Calu3 (cell line): ENCODE measurements at regions of chr1 and their contacts with region 1.

Region 1: GRCh38 chr1:171152549-171152948 is 32.6 kb upstream of the FMO2 start:
- DNase-seq: no peak
- H3K4me3 Mint-ChIP-seq: no peak overlapping the region
- H3K27ac Mint-ChIP-seq: no peak overlapping the region
- H3K4me1 Mint-ChIP-seq: no peaks in the 10 kb centered on the region
- H3K27me3 Mint-ChIP-seq: no peaks in the 10 kb centered on the region
- CTCF ChIP-seq: no peak

Region 2: GRCh38 chr1:170863621-170864020 is 288.9 kb before region 1 on chr1:
- CTCF ChIA-PET with region 1: interaction called, 10 read pairs
- intact Hi-C with region 1: no loop called
- DNase-seq: no peak
- H3K4me3 Mint-ChIP-seq: no peak overlapping the region
- H3K27ac Mint-ChIP-seq: no peak overlapping the region
- H3K4me1 Mint-ChIP-seq: no peaks in the 10 kb centered on the region
- H3K27me3 Mint-ChIP-seq: no peaks in the 10 kb centered on the region
- CTCF ChIP-seq: no peak

Region 3: DNA sequence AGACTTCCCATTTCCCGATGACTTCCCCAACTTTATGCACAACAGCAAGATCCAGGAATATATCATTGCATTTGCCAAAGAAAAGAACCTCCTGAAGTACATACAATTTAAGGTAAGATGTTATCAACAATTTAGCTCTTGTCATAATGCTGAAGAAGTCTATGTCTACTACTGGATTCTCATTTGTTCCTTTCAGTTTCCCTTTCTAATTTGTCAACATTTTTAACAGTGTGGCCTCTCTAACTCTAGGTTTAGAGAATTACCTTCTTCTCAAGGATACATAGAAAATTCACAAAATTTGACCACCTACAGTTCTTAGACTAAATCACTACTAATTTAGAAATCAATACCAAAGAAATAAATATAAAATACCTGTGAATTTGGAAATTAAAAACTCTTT is 48.7 kb before region 1 on chr1:
- CTCF ChIA-PET with region 1: no interaction called
- intact Hi-C with region 1: loop called (anchors 2 kb)
- DNase-seq: no peak
- H3K4me3 Mint-ChIP-seq: no peak overlapping the region
- H3K27ac Mint-ChIP-seq: no peak overlapping the region
- H3K4me1 Mint-ChIP-seq: no peaks in the 10 kb centered on the region
- H3K27me3 Mint-ChIP-seq: no peaks in the 10 kb centered on the region
- CTCF ChIP-seq: no peak